Heart left ventricle (tissue), 16 donors: ENCODE measurements at regions of chr5 and their contacts with region 1.

Region 1: GRCh38 chr5:43227655-43228054 is 35.6 kb downstream of the NIM1K start:
- DNase-seq: no peak
- ATAC-seq: no peak
- H3K4me3 ChIP-seq: no peak overlapping the region
- H3K27ac ChIP-seq: no peak overlapping the region
- H3K4me1 ChIP-seq: no peaks in the 10 kb centered on the region
- H3K27me3 ChIP-seq: no peaks in the 10 kb centered on the region
- CTCF ChIP-seq: peak; percentile 4 to 50 (median 32)
- POLR2A ChIP-seq: no peak

Region 2: GRCh38 chr5:43203373-43203772 is 24.3 kb before region 1 on chr5:
- intact Hi-C with region 1: no loop called
- DNase-seq: no peak
- ATAC-seq: no peak
- H3K4me3 ChIP-seq: no peak overlapping the region
- H3K27ac ChIP-seq: no peak overlapping the region
- H3K4me1 ChIP-seq: no peaks in the 10 kb centered on the region
- H3K27me3 ChIP-seq: no peaks in the 10 kb centered on the region
- CTCF ChIP-seq: no peak
- POLR2A ChIP-seq: no peak

Region 3: GRCh38 chr5:43256261-43256966 is 28.8 kb after region 1 on chr5:
- intact Hi-C with region 1: no loop called
- DNase-seq: no peak
- ATAC-seq: no peak
- H3K4me3 ChIP-seq: no peak overlapping the region
- H3K27ac ChIP-seq: no peak overlapping the region
- H3K4me1 ChIP-seq: no peaks in the 10 kb centered on the region
- H3K27me3 ChIP-seq: no peaks in the 10 kb centered on the region
- CTCF ChIP-seq: no peak
- POLR2A ChIP-seq: no peak

Region 4: GRCh38 chr5:43305948-43306565 is 78.4 kb after region 1 on chr5:
- intact Hi-C with region 1: loop called in 3 of 10 experiments (anchors 5 to 10 kb)
- DNase-seq: no peak
- ATAC-seq: peak in 2 of 4 donors; percentile 42 to 73
- H3K4me3 ChIP-seq: no peak overlapping the region
- H3K27ac ChIP-seq: no peak overlapping the region
- H3K4me1 ChIP-seq: peaks cover 0 to 55% (median 19%) of the 10 kb centered on the region in 12 donors
- H3K27me3 ChIP-seq: no peaks in the 10 kb centered on the region
- CTCF ChIP-seq: peak; percentile 45 to 77 (median 61)
- POLR2A ChIP-seq: no peak

Region 5: DNA sequence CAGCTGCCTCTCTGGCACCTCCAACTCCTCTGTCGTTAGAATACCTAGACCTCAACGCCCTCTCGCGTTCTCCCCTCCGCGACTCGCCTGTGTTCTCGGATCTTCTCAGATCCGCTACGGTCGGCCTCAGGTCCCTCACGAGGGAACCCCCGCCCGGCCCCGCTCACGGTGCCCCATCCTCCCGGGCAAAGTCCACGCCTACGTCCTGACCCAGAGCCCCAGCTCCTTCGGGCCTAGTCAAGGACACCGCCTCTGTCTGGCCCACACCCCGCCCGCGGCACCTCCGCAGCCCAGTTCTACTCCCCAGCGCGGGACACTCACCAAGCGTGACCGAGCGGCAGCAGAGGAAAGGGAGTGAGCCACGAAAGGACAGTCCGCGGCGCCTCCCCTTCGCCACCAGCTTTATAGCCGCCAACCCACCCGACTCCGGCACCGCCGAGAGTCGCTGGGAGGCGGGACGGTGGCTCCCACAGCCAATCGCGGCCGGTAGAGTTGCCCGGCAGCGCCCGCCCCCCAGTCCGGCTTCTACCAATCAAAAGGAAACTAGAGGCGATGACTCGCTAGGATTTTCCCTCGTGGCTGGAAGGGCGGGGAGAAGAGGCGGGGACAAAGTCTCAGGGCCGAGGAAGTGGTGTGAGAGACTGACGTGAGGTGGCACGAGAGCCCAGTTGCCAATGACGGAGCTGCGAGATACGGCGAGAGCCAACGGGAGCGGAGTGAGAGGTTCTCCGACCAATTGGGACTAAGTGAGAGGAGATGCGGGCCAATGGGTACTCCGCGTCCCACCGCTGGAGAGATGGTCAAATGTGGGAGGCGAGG is 85.6 kb after region 1 on chr5 and contains the start of gene HMGCS1:
- intact Hi-C with region 1: loop called in 3 of 10 experiments (anchors 5 to 10 kb)
- DNase-seq: peak; percentile 98 to 99 (median 99)
- ATAC-seq: peak; percentile 98 to 99 (median 98)
- H3K4me3 ChIP-seq: peak within 1 kb of the TSS; percentile 67 to 97 (median 84)
- H3K27ac ChIP-seq: peak within 1 kb of the TSS; percentile 65 to 95 (median 87)
- H3K4me1 ChIP-seq: peaks cover 0 to 41% (median 25%) of the 10 kb centered on the region in 12 donors
- H3K27me3 ChIP-seq: no peaks in the 10 kb centered on the region
- CTCF ChIP-seq: peak in 2 of 12 donors; percentile 11 to 23
- POLR2A ChIP-seq: peak; percentile 93 to 96
- total RNA-seq, gene HMGCS1: 7.9 to 34.8 (median 30.0) TPM

Region 6: GRCh38 chr5:43389679-43390329 is 162.1 kb after region 1 on chr5:
- intact Hi-C with region 1: loop called in 9 of 10 experiments (anchors 2 to 10 kb)
- DNase-seq: peak in 2 of 5 donors; percentile 31 to 44
- ATAC-seq: peak in 3 of 4 donors; percentile 86 to 92 (median 92)
- H3K4me3 ChIP-seq: no peak overlapping the region
- H3K27ac ChIP-seq: no peak overlapping the region
- H3K4me1 ChIP-seq: peaks cover 0 to 4% (median 0%) of the 10 kb centered on the region in 12 donors
- H3K27me3 ChIP-seq: peaks cover 0 to 2% (median 0%) of the 10 kb centered on the region in 9 donors
- CTCF ChIP-seq: peak; percentile 70 to 89 (median 80)
- POLR2A ChIP-seq: no peak